ENCODE measurements at regions of chr7 and their contacts with region 1.

Region 1: DNA sequence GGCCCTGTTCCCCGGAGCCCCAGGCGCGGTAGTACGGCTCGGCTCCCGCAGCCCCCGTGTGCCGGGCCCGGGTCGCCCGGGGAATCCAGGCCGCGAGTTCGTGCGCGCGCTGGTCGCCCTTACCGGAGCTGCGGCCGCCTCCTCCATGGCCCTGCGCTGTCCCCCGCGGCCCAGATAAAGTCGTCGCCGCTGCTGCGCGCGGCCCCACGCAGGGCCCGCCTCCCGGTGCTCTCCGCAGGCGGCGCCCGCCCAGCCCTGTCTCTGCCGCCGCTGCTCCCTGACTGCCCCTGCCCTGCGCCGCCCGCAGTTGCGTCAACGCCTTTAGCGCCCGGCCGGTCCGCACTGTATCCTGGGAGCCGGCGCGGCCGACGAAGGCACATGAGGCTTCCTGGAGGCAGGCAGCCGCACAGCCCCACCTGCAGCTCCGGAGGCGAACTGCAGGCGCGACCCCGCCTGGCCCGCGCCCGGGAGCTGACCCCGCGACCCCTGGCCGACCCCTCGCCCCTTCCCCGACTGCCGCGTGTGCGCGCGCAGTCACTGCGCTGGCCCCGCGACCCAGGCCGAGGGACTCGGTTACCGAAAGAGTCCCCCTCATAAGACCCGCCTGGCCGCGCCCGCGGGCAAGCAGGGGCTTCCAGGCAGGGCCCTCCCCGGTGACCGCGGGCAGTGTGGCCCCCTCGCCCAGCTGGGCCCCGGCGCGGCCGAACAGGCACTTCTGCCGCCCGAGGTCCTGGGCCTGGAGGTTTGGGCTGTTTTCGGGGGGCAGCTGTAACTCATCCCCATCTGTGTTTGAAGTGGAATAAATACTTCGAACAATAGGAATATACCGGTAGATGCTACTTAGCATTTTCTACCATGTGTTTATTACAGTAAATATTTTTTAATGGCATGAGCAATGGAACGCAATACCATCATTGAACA is 127.1 kb upstream of the ZNF746 start:
- DNase-seq: peak; percentile 88
- ATAC-seq: peak; percentile 94
- H3K4me3 ChIP-seq: peak overlapping the region; percentile 99
- H3K27ac ChIP-seq: no peak overlapping the region
- H3K4me1 ChIP-seq: peaks cover 17% of the 10 kb centered on the region
- H3K27me3 ChIP-seq: peaks cover 8% of the 10 kb centered on the region
- CTCF ChIP-seq: peak; percentile 74

Region 2: DNA sequence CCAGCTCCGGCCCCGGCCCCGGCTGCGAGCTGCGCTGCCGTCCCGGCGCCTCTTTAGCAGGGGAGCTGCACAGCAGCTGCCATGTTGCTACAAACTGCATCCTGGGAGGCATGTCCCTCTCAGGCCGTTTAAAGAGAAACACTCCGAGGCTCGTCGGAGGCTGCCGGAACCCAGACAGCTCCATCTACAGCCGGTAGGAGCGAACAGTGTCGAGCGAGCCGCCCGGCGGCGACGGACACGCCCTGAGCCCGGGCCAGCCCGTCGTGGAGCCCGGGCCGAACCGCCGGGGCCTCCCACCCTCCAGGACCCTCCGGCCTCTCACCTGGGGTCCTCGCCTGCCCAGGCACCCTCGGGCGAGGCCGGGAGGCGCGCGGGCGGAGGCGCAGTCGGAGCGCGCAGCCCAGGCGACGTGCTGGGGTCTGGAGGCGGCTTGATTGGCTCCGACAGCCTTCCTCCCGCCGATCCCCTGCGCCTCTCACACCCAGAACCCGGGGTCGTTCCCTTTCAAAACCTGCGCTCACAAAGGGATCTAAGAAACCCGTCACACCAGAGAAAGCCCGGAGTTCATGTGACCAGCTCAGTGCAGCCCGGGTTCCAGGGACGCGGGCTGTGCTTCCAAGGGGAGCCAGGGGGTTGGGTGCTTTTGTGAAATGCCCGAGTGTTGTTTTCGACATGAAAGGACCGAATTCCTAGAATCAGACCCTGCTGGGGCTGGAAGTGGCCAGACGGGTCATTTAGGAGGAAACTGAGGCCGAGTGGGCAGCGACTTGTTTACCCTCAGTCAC is 164.0 kb before region 1 on chr7 and contains the start of gene ZNF777:
- CTCF ChIA-PET with region 1: interaction called, 6 read pairs
- POLR2A ChIA-PET with region 1: interaction called, 27 read pairs
- intact Hi-C with region 1: no loop called
- DNase-seq: peak; percentile 78
- ATAC-seq: peak; percentile 95
- H3K4me3 ChIP-seq: peak within 1 kb of the TSS; percentile 96
- H3K27ac ChIP-seq: no peak within 1 kb of the TSS
- H3K4me1 ChIP-seq: peaks cover 15% of the 10 kb centered on the region; the same call in 1 of the 2 replicates
- H3K27me3 ChIP-seq: no peaks in the 10 kb centered on the region
- CTCF ChIP-seq: peak; percentile 53
- total RNA-seq, gene ZNF777: 9.9 and 10.3 TPM in 2 replicates

Region 3: GRCh38 chr7:149497456-149498261 is 127.0 kb before region 1 on chr7 and contains the start of gene ZNF746:
- CTCF ChIA-PET with region 1: interaction called, 3 read pairs
- POLR2A ChIA-PET with region 1: no interaction called
- intact Hi-C with region 1: loop called (anchors 2 kb)
- DNase-seq: peak; percentile 79
- ATAC-seq: peak; percentile 90
- H3K4me3 ChIP-seq: peak within 1 kb of the TSS; percentile 82
- H3K27ac ChIP-seq: no peak within 1 kb of the TSS
- H3K4me1 ChIP-seq: peaks cover 16% of the 10 kb centered on the region
- H3K27me3 ChIP-seq: no peaks in the 10 kb centered on the region
- CTCF ChIP-seq: peak; percentile 21; the same call in 1 of the 2 replicates
- total RNA-seq, gene ZNF746: 19.6 and 27.4 TPM in 2 replicates

Region 4: GRCh38 chr7:149714050-149714909 is 89.6 kb after region 1 on chr7:
- CTCF ChIA-PET with region 1: no interaction called
- POLR2A ChIA-PET with region 1: no interaction called
- intact Hi-C with region 1: loop called (anchors 2 kb)
- DNase-seq: peak; percentile 90
- ATAC-seq: peak; percentile 91
- H3K4me3 ChIP-seq: peak overlapping the region; percentile 85
- H3K27ac ChIP-seq: no peak overlapping the region
- H3K4me1 ChIP-seq: peaks cover 9% of the 10 kb centered on the region
- H3K27me3 ChIP-seq: no peaks in the 10 kb centered on the region
- CTCF ChIP-seq: no peak

Measured in PC-3 (cell line).